Heart right ventricle (tissue), 16 donors: ENCODE measurements at regions of chr12 and their contacts with region 1.

Region 1: GRCh38 chr12:20272801-20273200 is 95.5 kb upstream of the PDE3A start:
- DNase-seq: no peak
- ATAC-seq: peak; percentile 59 to 87 (median 79)
- H3K4me3 ChIP-seq: no peak overlapping the region
- H3K27ac ChIP-seq: peak overlapping the region; percentile 45 to 79 (median 67)
- H3K4me1 ChIP-seq: peaks cover 0 to 50% (median 18%) of the 10 kb centered on the region in 9 donors
- H3K27me3 ChIP-seq: no peaks in the 10 kb centered on the region
- CTCF ChIP-seq: no peak

Region 2: GRCh38 chr12:19744734-19745218 is 528.0 kb before region 1 on chr12:
- intact Hi-C with region 1: loop called in 1 of 10 experiments (anchors 10 kb)
- DNase-seq: peak in 1 of 2 donors; percentile 43
- ATAC-seq: peak; percentile 73 to 93 (median 88)
- H3K4me3 ChIP-seq: no peak overlapping the region
- H3K27ac ChIP-seq: peak overlapping the region in 7 of 10 donors; percentile 31 to 61 (median 50)
- H3K4me1 ChIP-seq: peaks cover 0 to 38% (median 18%) of the 10 kb centered on the region in 9 donors
- H3K27me3 ChIP-seq: no peaks in the 10 kb centered on the region
- CTCF ChIP-seq: no peak

Region 3: DNA sequence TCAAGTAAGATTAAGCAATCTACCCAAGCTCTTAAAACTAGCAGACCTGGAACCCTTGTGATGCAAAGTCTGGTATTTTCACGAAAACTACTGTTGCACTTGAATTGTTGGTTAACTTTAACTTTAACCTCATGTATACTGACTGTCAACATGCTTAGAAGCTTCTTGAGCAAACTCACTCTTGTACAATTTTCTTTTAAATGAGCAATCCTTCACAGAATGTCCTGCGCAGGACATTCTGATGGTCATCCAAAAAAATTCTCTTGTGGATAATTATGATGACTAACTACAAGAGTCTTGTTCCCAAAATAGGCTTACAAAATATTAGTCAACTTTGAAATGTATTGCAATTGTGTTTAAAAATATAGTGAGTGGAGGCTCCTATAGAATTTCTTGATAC is 41.5 kb after region 1 on chr12:
- intact Hi-C with region 1: loop called in 1 of 10 experiments (anchors 5 kb)
- DNase-seq: no peak
- ATAC-seq: peak in 7 of 8 donors; percentile 44 to 77 (median 49)
- H3K4me3 ChIP-seq: no peak overlapping the region
- H3K27ac ChIP-seq: peak overlapping the region in 2 of 10 donors; percentile 11 to 39
- H3K4me1 ChIP-seq: peaks cover 0 to 16% (median 8%) of the 10 kb centered on the region in 9 donors
- H3K27me3 ChIP-seq: no peaks in the 10 kb centered on the region
- CTCF ChIP-seq: no peak

Region 4: DNA sequence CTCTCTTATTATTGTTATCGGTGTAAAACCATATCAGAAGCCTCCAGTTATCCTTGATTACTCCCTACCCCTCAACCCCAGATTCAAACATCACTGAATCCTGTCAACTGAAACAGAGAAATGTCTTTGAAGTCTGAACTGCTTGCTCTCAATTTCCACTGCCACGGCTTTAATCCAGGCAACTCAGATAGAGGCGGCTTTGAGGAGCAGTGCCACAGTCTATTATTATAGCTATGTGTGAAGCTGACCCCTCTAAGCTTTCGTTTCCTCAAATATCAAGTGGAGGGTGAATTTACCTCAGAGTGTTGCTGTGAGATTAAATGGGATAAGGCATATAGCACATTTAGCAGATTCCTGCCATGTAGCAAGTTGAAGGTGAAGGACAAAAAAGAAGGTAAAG is 46.6 kb after region 1 on chr12:
- intact Hi-C with region 1: loop called in 1 of 10 experiments (anchors 2 kb)
- DNase-seq: peak in 1 of 2 donors; percentile 15
- ATAC-seq: peak in 7 of 8 donors; percentile 52 to 84 (median 71)
- H3K4me3 ChIP-seq: peak overlapping the region in 6 of 10 donors; percentile 1 to 19 (median 9)
- H3K27ac ChIP-seq: peak overlapping the region; percentile 6 to 82 (median 74)
- H3K4me1 ChIP-seq: peaks cover 0 to 24% (median 4%) of the 10 kb centered on the region in 9 donors
- H3K27me3 ChIP-seq: no peaks in the 10 kb centered on the region
- CTCF ChIP-seq: no peak